Activated T-helper 1 cell treated with anti-CD3 and anti-CD28 coated beads, Interleukin-12 subunit alpha, Interleukin-12 subunit beta, Interleukin-2, Interleukin-4 antibody, amounts not matched to agents 30 ng/mL and 10 ng/mL and 1 ng/mL, durations not matched to agents 14 hours and 24 hours and 36 hours (primary cell): ENCODE measurements at regions of chr3 and their contacts with region 1.

Region 1: DNA sequence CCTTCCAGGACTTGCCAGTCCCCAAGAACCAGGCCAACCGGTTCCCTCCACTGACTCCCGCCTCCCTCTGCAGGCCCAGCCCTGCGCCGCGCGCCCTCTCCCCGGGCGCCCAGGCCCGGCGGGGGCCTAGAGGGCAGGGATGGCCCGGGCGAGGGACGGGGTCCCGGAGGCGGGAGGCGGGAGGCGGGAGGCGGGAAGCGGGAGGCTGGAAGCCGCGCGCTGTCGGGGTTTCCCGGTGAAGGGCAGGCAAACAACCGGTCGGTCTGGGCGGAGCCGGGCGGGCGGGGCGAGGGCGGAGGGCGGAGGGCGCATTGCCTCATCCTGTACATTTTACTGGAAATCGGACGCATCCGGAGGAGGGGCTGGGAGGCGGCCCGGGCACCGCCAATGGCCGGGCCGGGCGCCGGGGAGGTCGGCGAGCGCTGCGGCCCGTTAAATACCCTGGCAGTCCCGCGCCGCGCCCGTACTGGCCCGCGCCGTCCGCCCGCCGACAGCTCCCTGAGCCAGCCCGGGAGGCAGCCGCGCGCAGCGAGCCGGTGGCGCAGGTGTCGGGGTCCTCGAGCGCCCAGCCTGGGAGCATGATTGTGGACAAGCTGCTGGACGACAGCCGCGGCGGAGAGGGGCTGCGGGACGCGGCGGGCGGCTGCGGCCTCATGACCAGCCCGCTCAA is at the start of gene NFKBIZ:
- DNase-seq: peak; percentile 93
- H3K4me3 Mint-ChIP-seq: peak within 1 kb of the TSS; percentile 93
- H3K27ac Mint-ChIP-seq: peak within 1 kb of the TSS; percentile 96
- H3K4me1 Mint-ChIP-seq: peaks cover 50% of the 10 kb centered on the region
- H3K27me3 Mint-ChIP-seq: no peaks in the 10 kb centered on the region
- total RNA-seq, gene NFKBIZ: 72.4 and 79.7 TPM in 2 replicates

Region 2: DNA sequence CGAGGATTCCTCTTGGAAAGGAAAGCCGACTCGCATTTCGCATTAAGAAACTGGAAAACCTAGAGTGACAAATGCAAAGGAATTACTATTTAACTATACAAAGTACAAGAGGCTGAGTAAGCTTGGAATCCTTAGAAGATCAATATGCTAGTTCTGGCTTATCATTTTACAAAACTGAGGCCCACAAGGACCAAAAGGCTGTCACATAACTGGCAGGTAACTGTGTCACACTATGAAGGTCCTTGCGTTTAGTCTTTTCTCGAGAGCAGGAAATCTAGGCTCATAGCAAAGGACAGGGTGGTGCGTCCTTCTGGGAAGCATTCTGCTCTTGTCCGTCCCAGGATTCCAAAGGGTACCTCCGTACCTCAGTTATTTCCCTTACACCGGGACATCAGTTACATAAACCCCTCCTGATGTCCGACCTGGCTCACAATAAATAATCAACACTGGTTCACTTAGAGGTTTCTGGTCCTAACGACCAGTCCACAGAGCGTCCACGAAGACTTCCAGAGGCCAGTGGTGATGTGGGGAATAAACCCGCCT is 163.2 kb before region 1 on chr3:
- intact Hi-C with region 1: loop called (anchors 2 kb)
- DNase-seq: no peak
- H3K4me3 Mint-ChIP-seq: peak overlapping the region; percentile 99
- H3K27ac Mint-ChIP-seq: peak overlapping the region; percentile 97
- H3K4me1 Mint-ChIP-seq: peaks cover 29% of the 10 kb centered on the region
- H3K27me3 Mint-ChIP-seq: no peaks in the 10 kb centered on the region

Region 3: GRCh38 chr3:101803173-101803782 is 45.9 kb before region 1 on chr3:
- intact Hi-C with region 1: loop called (anchors 1 kb)
- DNase-seq: peak; percentile 48
- H3K4me3 Mint-ChIP-seq: no peak overlapping the region
- H3K27ac Mint-ChIP-seq: no peak overlapping the region
- H3K4me1 Mint-ChIP-seq: peaks cover 22% of the 10 kb centered on the region
- H3K27me3 Mint-ChIP-seq: no peaks in the 10 kb centered on the region

Region 4: GRCh38 chr3:101836652-101837598 is 12.3 kb before region 1 on chr3:
- intact Hi-C with region 1: loop called (anchors 1 kb)
- DNase-seq: no peak
- H3K4me3 Mint-ChIP-seq: no peak overlapping the region
- H3K27ac Mint-ChIP-seq: peak overlapping the region; percentile 6
- H3K4me1 Mint-ChIP-seq: peaks cover 80% of the 10 kb centered on the region
- H3K27me3 Mint-ChIP-seq: no peaks in the 10 kb centered on the region

Region 5: DNA sequence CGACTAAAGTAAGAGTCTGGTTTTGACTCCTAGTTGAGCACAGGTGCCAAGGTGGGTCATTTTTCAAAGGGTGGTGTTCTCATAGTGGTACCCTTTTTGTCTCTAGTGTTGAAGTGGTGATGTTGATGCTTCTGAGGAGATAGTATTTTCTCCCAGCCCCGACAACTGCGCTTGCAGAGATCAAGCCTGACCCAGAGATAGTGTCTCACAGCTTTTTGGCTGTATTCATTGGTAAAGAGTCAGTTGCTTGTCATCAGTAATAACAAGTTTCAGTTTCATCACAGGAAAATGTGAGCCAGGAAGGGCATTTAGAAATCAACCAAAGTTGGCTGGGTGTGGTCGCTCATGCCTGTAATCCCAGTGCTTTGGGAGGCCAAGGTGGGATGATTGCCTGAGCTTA is 139.4 kb after region 1 on chr3:
- intact Hi-C with region 1: loop called (anchors 1 kb)
- DNase-seq: no peak
- H3K4me3 Mint-ChIP-seq: no peak overlapping the region
- H3K27ac Mint-ChIP-seq: peak overlapping the region; percentile 47
- H3K4me1 Mint-ChIP-seq: peaks cover 44% of the 10 kb centered on the region
- H3K27me3 Mint-ChIP-seq: peaks cover 11% of the 10 kb centered on the region

Region 6: GRCh38 chr3:102038477-102039142 is 189.4 kb after region 1 on chr3:
- intact Hi-C with region 1: no loop called
- DNase-seq: no peak
- H3K4me3 Mint-ChIP-seq: no peak overlapping the region
- H3K27ac Mint-ChIP-seq: no peak overlapping the region
- H3K4me1 Mint-ChIP-seq: peaks cover 13% of the 10 kb centered on the region
- H3K27me3 Mint-ChIP-seq: peaks cover 12% of the 10 kb centered on the region

Region 7: GRCh38 chr3:102229062-102229655 is 380.0 kb after region 1 on chr3:
- intact Hi-C with region 1: loop called (anchors 1 kb)
- DNase-seq: peak; percentile 62
- H3K4me3 Mint-ChIP-seq: no peak overlapping the region
- H3K27ac Mint-ChIP-seq: no peak overlapping the region
- H3K4me1 Mint-ChIP-seq: peaks cover 20% of the 10 kb centered on the region
- H3K27me3 Mint-ChIP-seq: peaks cover 16% of the 10 kb centered on the region